ENCODE measurements at regions of chr1 and their contacts with region 1.

Region 1: DNA sequence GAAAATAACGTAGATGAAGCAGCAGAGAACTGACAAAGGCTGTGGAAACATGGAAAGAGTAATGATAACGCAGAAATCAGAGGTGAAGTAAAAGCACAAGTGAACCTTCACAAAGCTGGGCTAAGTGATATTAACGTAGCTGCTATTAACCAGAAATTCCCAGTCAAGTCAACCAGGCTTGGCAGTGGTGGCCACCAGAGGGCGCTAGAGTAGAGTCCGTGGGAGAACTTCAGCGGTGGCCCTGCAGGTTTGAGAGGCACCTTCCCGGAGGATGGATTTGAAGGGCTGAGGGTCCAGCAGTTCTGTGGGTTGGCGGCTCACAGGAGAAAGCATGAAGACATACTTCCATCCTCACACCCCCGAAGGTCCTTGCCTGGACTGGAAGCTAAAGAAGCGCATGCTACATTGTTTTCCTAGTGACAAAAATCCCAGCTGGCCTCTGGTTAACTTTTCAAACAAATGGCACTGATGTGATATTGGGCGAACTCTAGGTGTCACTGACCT is 81.7 kb upstream of the ZNF648 start:
- DNase-seq: peak; percentile 27
- ATAC-seq: peak; percentile 73
- H3K4me3 ChIP-seq: no peak overlapping the region
- H3K27ac ChIP-seq: no peak overlapping the region
- H3K4me1 ChIP-seq: peaks cover 9% of the 10 kb centered on the region
- H3K27me3 ChIP-seq: no peaks in the 10 kb centered on the region
- CTCF ChIP-seq: peak; percentile 89 to 97 (median 91); a peak in 5 of 6 replicates
- EP300 ChIP-seq: no peak
- POLR2A ChIP-seq: no peak
- RAD21 ChIP-seq: peak; percentile 95

Region 2: DNA sequence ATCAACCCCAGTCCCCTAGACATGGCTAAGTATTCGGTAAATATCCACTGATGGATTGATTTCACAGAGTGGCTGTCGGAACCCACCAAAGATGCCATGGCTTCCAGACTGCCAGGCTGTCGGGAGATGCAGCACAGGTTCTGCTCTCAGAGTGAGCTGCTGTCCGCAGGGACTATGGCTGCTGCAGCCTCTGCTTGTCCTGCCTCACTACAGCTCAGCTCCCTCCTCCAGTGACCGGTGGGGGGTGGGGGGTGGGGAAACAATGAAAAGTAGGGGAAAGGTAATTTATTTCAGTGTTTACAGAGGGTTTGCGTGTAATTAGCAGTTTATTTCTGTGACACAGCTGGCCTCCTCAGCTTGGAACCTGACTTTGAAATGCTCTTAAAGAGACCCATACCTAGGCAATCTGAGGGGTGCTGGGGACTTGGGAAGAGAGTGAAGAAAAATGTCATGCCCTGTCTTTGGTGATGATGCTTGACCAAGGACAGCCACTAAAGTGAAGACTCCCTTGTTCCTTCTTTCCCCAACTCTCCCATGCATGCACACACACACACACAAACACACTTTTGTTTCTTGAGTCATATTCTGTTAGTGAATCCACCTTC is 550.8 kb before region 1 on chr1:
- CTCF ChIA-PET with region 1: no interaction called
- POLR2A ChIA-PET with region 1: no interaction called
- RAD21 ChIA-PET with region 1: no interaction called
- SMC1A ChIA-PET with region 1: no interaction called
- in situ Hi-C with region 1: no loop called
- intact Hi-C with region 1: no loop called
- DNase-seq: no peak
- ATAC-seq: no peak
- H3K4me3 ChIP-seq: no peak overlapping the region
- H3K27ac ChIP-seq: no peak overlapping the region
- H3K4me1 ChIP-seq: no peaks in the 10 kb centered on the region
- H3K27me3 ChIP-seq: no peaks in the 10 kb centered on the region
- CTCF ChIP-seq: no peak
- EP300 ChIP-seq: no peak
- POLR2A ChIP-seq: no peak
- RAD21 ChIP-seq: no peak

Region 3: GRCh38 chr1:182129398-182129797 is 13.8 kb before region 1 on chr1:
- CTCF ChIA-PET with region 1: interaction called, 26 read pairs
- POLR2A ChIA-PET with region 1: interaction called, 5 read pairs
- RAD21 ChIA-PET with region 1: interaction called, 3 read pairs
- SMC1A ChIA-PET with region 1: interaction called, 5 read pairs
- in situ Hi-C with region 1: no loop called
- intact Hi-C with region 1: no loop called
- DNase-seq: no peak
- ATAC-seq: no peak
- H3K4me3 ChIP-seq: no peak overlapping the region
- H3K27ac ChIP-seq: no peak overlapping the region
- H3K4me1 ChIP-seq: no peaks in the 10 kb centered on the region
- H3K27me3 ChIP-seq: no peaks in the 10 kb centered on the region; a peak in 1 of 4 replicates
- CTCF ChIP-seq: no peak
- EP300 ChIP-seq: no peak
- POLR2A ChIP-seq: no peak
- RAD21 ChIP-seq: no peak

Region 4: GRCh38 chr1:182170891-182171461 is 27.8 kb after region 1 on chr1:
- CTCF ChIA-PET with region 1: interaction called, 14 read pairs
- POLR2A ChIA-PET with region 1: no interaction called
- RAD21 ChIA-PET with region 1: interaction called, 20 read pairs
- SMC1A ChIA-PET with region 1: interaction called, 7 read pairs
- in situ Hi-C with region 1: no loop called
- intact Hi-C with region 1: no loop called
- DNase-seq: no peak
- ATAC-seq: peak; percentile 68
- H3K4me3 ChIP-seq: no peak overlapping the region
- H3K27ac ChIP-seq: no peak overlapping the region
- H3K4me1 ChIP-seq: no peaks in the 10 kb centered on the region; the same call in 1 of the 2 replicates
- H3K27me3 ChIP-seq: no peaks in the 10 kb centered on the region
- CTCF ChIP-seq: no peak
- EP300 ChIP-seq: peak; percentile 33 to 45; a peak in 1 of 4 replicates
- POLR2A ChIP-seq: no peak
- RAD21 ChIP-seq: no peak

Region 5: GRCh38 chr1:182198049-182198501 is 54.9 kb after region 1 on chr1:
- CTCF ChIA-PET with region 1: interaction called, 159 read pairs
- POLR2A ChIA-PET with region 1: interaction called, 4 read pairs
- RAD21 ChIA-PET with region 1: interaction called, 116 read pairs
- SMC1A ChIA-PET with region 1: interaction called, 108 read pairs
- in situ Hi-C with region 1: no loop called
- intact Hi-C with region 1: loop called (anchors 2 kb)
- DNase-seq: no peak
- ATAC-seq: peak; percentile 32; the same call in 1 of the 3 replicates
- H3K4me3 ChIP-seq: no peak overlapping the region
- H3K27ac ChIP-seq: no peak overlapping the region
- H3K4me1 ChIP-seq: no peaks in the 10 kb centered on the region
- H3K27me3 ChIP-seq: peaks cover 0 to 3% of the 10 kb centered on the region in 2 experiments; a peak in 1 of 4 replicates
- CTCF ChIP-seq: peak; percentile 25 to 46 (median 35); a peak in 5 of 6 replicates
- EP300 ChIP-seq: no peak
- POLR2A ChIP-seq: no peak
- RAD21 ChIP-seq: peak; percentile 60

Region 6: GRCh38 chr1:182317611-182318161 is 174.5 kb after region 1 on chr1:
- CTCF ChIA-PET with region 1: interaction called, 15 read pairs
- POLR2A ChIA-PET with region 1: no interaction called
- RAD21 ChIA-PET with region 1: no interaction called
- SMC1A ChIA-PET with region 1: no interaction called
- in situ Hi-C with region 1: no loop called
- intact Hi-C with region 1: no loop called
- DNase-seq: no peak
- ATAC-seq: no peak
- H3K4me3 ChIP-seq: no peak overlapping the region
- H3K27ac ChIP-seq: no peak overlapping the region
- H3K4me1 ChIP-seq: no peaks in the 10 kb centered on the region
- H3K27me3 ChIP-seq: no peaks in the 10 kb centered on the region
- CTCF ChIP-seq: no peak
- EP300 ChIP-seq: no peak
- POLR2A ChIP-seq: no peak
- RAD21 ChIP-seq: no peak

Region 7: GRCh38 chr1:182397771-182398393 is 254.7 kb after region 1 on chr1:
- CTCF ChIA-PET with region 1: interaction called, 418 read pairs
- POLR2A ChIA-PET with region 1: interaction called, 24 read pairs
- RAD21 ChIA-PET with region 1: interaction called, 282 read pairs
- SMC1A ChIA-PET with region 1: interaction called, 303 read pairs
- in situ Hi-C with region 1: loop called (anchors 5 kb)
- intact Hi-C with region 1: loop called (anchors 1 kb)
- DNase-seq: no peak
- ATAC-seq: no peak
- H3K4me3 ChIP-seq: no peak overlapping the region
- H3K27ac ChIP-seq: no peak overlapping the region
- H3K4me1 ChIP-seq: no peaks in the 10 kb centered on the region
- H3K27me3 ChIP-seq: no peaks in the 10 kb centered on the region
- CTCF ChIP-seq: no peak
- EP300 ChIP-seq: no peak
- POLR2A ChIP-seq: no peak
- RAD21 ChIP-seq: no peak

Region 8: GRCh38 chr1:182789138-182790076 is 646.2 kb after region 1 on chr1 and contains the start of gene NPL:
- CTCF ChIA-PET with region 1: interaction called, 28 read pairs
- POLR2A ChIA-PET with region 1: no interaction called
- RAD21 ChIA-PET with region 1: interaction called, 4 read pairs
- SMC1A ChIA-PET with region 1: interaction called, 6 read pairs
- in situ Hi-C with region 1: loop called (anchors 10 kb)
- intact Hi-C with region 1: no loop called
- DNase-seq: peak; percentile 34
- ATAC-seq: peak; percentile 97
- H3K4me3 ChIP-seq: peak within 1 kb of the TSS; percentile 59
- H3K27ac ChIP-seq: no peak within 1 kb of the TSS
- H3K4me1 ChIP-seq: peaks cover 7% of the 10 kb centered on the region; the same call in 1 of the 2 replicates
- H3K27me3 ChIP-seq: no peaks in the 10 kb centered on the region
- CTCF ChIP-seq: no peak
- EP300 ChIP-seq: no peak
- POLR2A ChIP-seq: peak; percentile 99
- RAD21 ChIP-seq: no peak
- polyA plus RNA-seq, gene NPL: 12.6 to 15.1 TPM